A673 (cell line): ENCODE measurements at regions of chr9 and their contacts with region 1.

Region 1: DNA sequence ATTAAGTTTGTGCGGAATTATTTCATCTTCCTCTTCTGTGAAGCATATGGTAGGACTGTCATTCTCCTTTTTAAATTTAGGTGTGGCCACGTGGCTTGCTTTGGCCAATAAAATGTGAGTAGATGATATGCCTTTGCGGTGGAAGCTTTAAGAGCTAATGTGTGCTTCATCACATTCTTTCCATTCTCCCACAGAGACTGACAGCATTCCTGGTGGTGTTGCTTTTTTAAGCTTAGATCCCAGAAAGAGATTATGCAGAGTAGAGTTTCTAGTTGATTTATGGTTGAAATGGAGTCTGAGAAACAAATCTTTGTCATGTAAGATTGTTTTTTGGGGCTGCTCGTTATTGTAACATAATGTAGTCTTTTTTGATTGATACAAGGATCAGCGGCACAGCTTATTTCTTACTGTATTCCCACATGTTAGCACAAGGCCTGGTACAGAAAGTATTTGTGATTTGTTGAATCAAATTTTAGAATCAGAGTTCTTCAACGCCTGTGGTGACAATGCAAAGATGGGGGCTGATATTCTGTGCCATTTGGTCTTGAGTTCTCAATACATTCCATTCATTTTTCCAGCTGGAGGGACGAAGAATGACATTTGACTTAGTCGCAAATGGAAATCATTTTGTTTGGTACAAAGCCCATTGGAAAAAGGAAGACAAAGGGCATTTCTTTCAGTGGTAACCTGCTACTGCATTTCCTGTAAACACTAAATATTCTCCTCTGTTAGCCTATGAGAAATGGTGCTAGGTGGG is 209.9 kb upstream of the VLDLR start:
- DNase-seq: peak; percentile 35
- H3K4me3 ChIP-seq: no peak overlapping the region
- H3K27ac ChIP-seq: no peak overlapping the region
- H3K4me1 ChIP-seq: peaks cover 3% of the 10 kb centered on the region
- H3K27me3 ChIP-seq: no peaks in the 10 kb centered on the region
- CTCF ChIP-seq: no peak

Region 2: GRCh38 chr9:1910269-1910811 is 501.3 kb before region 1 on chr9:
- CTCF ChIA-PET with region 1: no interaction called
- POLR2A ChIA-PET with region 1: no interaction called
- intact Hi-C with region 1: no loop called
- DNase-seq: no peak
- H3K4me3 ChIP-seq: no peak overlapping the region
- H3K27ac ChIP-seq: no peak overlapping the region
- H3K4me1 ChIP-seq: no peaks in the 10 kb centered on the region
- H3K27me3 ChIP-seq: no peaks in the 10 kb centered on the region
- CTCF ChIP-seq: no peak

Region 3: GRCh38 chr9:2461892-2462291 is 50.3 kb after region 1 on chr9:
- CTCF ChIA-PET with region 1: no interaction called
- POLR2A ChIA-PET with region 1: no interaction called
- intact Hi-C with region 1: loop called (anchors 5 kb)
- DNase-seq: peak; percentile 79
- H3K4me3 ChIP-seq: no peak overlapping the region
- H3K27ac ChIP-seq: no peak overlapping the region
- H3K4me1 ChIP-seq: peaks cover 10% of the 10 kb centered on the region
- H3K27me3 ChIP-seq: no peaks in the 10 kb centered on the region
- CTCF ChIP-seq: no peak

Region 4: DNA sequence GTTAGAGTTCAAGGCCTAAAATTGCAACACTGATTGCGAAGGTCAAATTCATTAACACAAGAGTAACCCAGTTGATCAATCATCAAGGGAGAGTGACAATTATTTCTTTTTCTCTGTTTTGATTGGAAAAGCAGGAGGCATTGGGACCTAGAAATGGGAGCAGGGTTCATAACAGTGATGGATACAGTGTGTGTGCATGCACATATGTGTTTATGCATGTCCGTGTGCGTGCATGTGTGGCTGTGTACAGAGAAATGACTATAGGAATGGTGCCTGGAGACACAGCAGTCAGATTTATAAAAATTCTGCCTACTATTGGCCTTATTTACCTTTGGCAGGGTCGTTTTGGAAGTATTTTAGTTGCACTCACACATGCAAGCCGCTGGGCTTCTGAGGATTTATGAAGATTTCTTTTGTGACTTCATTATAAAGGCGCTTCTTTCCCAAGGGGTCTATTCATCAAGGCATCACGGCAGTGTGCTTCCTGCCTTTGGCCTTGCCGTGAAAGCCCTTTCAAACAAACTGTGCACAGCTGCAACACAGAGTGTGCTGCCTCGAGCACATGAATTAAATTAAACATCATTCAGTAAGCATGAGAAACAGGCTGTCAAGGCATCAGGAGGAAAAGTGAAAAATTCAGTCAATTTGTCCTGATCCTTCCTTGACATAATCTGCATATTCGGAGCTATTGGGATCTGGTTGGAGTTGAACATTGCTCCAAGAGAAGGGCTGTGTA is 555.1 kb after region 1 on chr9:
- CTCF ChIA-PET with region 1: no interaction called
- POLR2A ChIA-PET with region 1: no interaction called
- intact Hi-C with region 1: no loop called
- DNase-seq: peak; percentile 74
- H3K4me3 ChIP-seq: no peak overlapping the region
- H3K27ac ChIP-seq: no peak overlapping the region
- H3K4me1 ChIP-seq: peaks cover 7% of the 10 kb centered on the region
- H3K27me3 ChIP-seq: no peaks in the 10 kb centered on the region
- CTCF ChIP-seq: no peak